HEK293T (cell line): ENCODE measurements at regions of chr15 and their contacts with region 1.

Region 1: GRCh38 chr15:99062226-99062625 is 42.7 kb upstream of the SYNM start:
- DNase-seq: no peak

Region 2: GRCh38 chr15:99076552-99077308 is 14.5 kb after region 1 on chr15:
- CTCF ChIA-PET with region 1: interaction called, 14 read pairs
- POLR2A ChIA-PET with region 1: no interaction called
- DNase-seq: peak; percentile 80